Cardiac septum (tissue), 1 donor: ENCODE measurements at regions of chr12 and their contacts with region 1.

Region 1: DNA sequence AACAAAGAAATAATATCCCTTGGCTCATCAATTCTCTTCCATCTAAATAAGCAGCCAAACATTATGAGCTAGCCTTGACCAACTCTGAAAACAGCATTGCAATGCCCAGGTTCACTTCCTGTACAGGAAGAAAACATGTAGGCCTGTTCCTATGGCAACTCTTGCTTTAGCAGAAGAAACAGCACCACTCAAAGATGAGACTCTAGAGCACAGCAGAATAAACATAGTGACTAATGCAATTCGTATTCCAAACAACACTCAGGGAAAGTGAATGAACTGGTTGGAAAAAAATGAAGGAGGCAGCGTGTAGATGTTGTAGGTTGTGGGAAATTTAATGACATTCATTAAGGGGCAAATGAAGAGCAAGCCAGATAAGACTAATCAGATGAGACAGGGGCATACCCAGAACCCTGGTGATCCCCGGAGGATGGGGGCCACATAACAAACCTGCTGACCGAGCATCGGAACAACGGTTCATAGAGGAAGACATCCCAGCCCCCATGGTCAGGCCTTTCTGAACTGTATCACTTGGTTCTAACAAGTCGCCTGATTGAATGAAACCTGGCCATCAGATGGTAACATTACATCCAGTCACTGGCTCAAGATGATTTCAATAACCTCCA is 9.0 kb downstream of the ARHGDIB start:
- DNase-seq: no peak

Region 2: DNA sequence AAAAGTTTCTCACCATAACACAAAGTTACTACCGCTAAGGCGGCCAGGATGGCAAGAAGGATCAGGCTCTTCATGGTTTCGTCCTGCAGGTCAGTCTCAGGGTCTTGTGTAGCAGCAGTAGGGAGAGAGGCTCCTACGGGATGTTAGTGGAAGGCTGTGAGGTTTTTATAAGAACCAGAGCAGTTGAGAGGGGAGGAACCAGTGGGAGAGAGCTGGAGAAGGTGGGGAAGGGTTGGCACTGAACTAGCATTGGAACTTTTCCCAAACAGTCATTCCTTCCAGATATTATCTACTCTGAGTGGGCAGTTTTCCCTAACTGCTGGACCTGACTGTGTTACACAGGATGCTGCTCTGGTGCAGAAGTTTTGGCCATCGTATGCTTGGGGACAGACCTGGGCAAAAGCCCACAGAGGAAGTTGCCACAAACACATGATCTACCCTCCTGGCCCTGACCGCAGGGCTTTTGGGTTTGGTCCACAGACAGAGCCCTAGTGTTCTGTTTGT is 66.6 kb before region 1 on chr12 and contains the start of gene MGP:
- intact Hi-C with region 1: loop called (anchors 5 kb)
- DNase-seq: peak; percentile 73
- total RNA-seq, gene MGP: 677 TPM

Region 3: GRCh38 chr12:14901228-14901562 is 51.2 kb before region 1 on chr12:
- intact Hi-C with region 1: loop called (anchors 5 kb)
- DNase-seq: no peak

Region 4: DNA sequence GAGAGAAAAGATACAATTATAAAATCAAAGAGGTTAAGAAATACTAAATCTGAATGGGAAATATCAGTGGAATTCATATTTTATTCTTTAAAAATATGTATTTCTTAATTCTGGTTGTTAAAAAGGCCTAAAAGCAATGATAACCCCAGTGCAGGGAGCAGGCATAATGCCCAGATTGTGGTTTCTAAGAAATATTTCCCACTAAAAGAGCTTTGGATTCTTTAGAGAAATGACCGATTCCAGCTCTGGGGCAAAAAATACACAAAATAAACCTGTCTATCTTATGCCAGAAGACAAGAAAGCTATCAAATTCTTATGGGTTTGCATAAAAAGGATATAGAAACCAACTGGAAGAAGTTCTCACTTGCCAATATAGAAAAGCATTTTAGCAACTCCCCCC is 92.1 kb after region 1 on chr12:
- intact Hi-C with region 1: no loop called
- DNase-seq: no peak